ENCODE measurements at regions of chr11 and their contacts with region 1.

Region 1: GRCh38 chr11:3854977-3855807 is at the start of gene STIM1:
- DNase-seq: peak; percentile 88
- ATAC-seq: peak; percentile 76
- H3K4me3 ChIP-seq: peak within 1 kb of the TSS; percentile 94
- H3K27ac ChIP-seq: peak within 1 kb of the TSS; percentile 97
- H3K4me1 ChIP-seq: peaks cover 32% of the 10 kb centered on the region
- H3K27me3 ChIP-seq: no peaks in the 10 kb centered on the region
- CTCF ChIP-seq: peak; percentile 87 to 98 (median 93); a peak in 5 of 6 replicates
- EP300 ChIP-seq: no peak
- POLR2A ChIP-seq: peak; percentile 72
- RAD21 ChIP-seq: peak; percentile 92
- polyA plus RNA-seq, gene STIM1: 8.6 to 9.9 TPM

Region 2: DNA sequence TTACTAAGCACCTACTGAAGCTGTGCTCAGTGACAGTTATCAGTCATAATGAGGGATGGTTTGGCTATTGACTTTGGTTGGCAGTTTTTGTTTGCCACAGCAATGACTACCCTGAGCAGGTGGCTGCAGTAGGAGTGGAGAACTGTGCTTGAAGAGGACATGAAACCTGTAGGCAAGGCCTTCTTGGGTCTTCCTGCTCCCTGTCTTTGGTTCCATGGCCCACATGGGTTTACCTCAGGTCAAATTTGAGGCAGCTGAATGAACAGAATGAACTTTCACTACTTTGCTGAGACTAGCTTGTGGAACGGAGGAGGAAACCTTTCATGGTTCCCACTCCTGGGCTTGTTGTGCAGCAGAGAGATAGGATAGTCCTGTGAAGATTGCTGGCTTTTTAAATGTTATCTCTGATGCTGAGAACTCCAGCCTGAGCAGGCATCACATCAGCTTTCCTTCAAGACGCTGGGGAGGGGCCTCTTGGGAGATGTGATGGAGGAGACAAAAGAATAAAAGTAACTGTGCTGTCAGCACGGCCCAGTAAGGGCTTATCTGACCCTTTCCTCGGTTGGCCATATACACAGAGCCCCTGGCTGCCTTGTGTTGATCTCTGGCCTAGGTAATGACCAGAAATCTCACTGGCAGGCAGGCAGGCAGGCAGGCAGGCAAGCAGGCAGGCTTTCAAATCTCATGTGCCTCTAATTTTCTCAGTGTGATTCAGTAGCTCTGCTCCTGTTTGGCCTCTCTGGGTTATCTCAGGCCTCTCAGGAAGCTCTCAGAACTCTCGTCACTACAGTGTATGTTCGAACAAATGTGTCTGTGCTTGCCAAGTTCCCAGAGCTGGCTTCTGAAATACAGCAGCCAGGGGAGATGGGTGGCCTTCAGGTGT is 12.3 kb after region 1 on chr11:
- CTCF ChIA-PET with region 1: interaction called, 1,047 read pairs
- POLR2A ChIA-PET with region 1: interaction called, 405 read pairs
- RAD21 ChIA-PET with region 1: interaction called, 253 read pairs
- SMC1A ChIA-PET with region 1: interaction called, 633 read pairs
- in situ Hi-C with region 1: no loop called
- intact Hi-C with region 1: no loop called
- DNase-seq: peak; percentile 66
- ATAC-seq: peak; percentile 57
- H3K4me3 ChIP-seq: peak overlapping the region; percentile 28; the same call in 1 of the 2 replicates
- H3K27ac ChIP-seq: peak overlapping the region; percentile 82
- H3K4me1 ChIP-seq: peaks cover 65% of the 10 kb centered on the region
- H3K27me3 ChIP-seq: no peaks in the 10 kb centered on the region
- CTCF ChIP-seq: no peak
- EP300 ChIP-seq: no peak
- POLR2A ChIP-seq: no peak
- RAD21 ChIP-seq: no peak

Region 3: DNA sequence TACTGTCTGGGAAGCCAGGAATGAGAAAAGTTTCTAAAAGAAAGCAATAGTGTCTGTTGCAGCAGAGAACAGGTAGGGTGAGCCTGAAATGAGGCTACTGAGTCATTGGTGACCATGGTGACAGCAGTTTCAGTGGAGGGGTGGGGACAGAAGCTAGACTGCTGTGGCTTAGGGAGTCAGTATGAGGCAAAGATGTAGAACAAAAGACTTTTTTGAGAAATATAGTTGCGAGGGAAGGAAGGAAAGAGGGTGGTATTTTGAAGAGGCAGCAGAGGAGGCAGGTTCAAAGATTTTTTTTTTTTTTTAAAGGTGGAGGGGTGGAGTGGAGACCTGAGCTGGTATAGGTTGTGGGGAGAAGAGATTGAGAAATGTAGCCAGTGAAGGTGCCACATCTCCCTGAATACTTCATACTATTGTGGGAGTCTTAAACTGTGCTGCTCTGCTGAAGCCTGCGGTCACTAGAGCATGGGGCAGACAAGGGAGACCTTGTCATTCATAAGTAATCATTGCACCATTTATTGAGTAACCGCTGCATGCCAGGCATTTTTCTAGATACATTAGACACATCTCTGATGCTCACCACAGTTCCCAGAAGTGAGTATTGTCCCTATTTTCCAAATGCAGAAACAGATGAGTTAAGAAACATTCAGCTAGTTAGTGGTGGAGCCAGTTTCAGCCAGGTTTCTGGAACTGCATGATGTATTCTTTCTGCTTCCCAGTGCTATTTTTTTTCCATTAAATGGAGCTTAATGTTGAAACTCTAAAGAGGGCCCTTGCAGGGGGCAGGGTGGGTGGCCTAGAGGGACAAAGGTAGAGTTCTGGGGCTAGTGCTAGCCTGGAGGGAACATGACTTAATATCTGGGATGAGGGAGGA is 50.1 kb after region 1 on chr11:
- CTCF ChIA-PET with region 1: interaction called, 36 read pairs
- POLR2A ChIA-PET with region 1: interaction called, 10 read pairs
- RAD21 ChIA-PET with region 1: interaction called, 87 read pairs
- SMC1A ChIA-PET with region 1: interaction called, 21 read pairs
- in situ Hi-C with region 1: no loop called
- intact Hi-C with region 1: no loop called
- DNase-seq: no peak
- ATAC-seq: peak; percentile 89
- H3K4me3 ChIP-seq: no peak overlapping the region
- H3K27ac ChIP-seq: no peak overlapping the region
- H3K4me1 ChIP-seq: peaks cover 51% of the 10 kb centered on the region
- H3K27me3 ChIP-seq: no peaks in the 10 kb centered on the region
- CTCF ChIP-seq: no peak
- EP300 ChIP-seq: no peak
- POLR2A ChIP-seq: no peak
- RAD21 ChIP-seq: no peak

Region 4: GRCh38 chr11:3939211-3939610 is 84.0 kb after region 1 on chr11:
- CTCF ChIA-PET with region 1: interaction called, 16 read pairs
- POLR2A ChIA-PET with region 1: no interaction called
- RAD21 ChIA-PET with region 1: interaction called, 5 read pairs
- SMC1A ChIA-PET with region 1: interaction called, 17 read pairs
- in situ Hi-C with region 1: no loop called
- intact Hi-C with region 1: no loop called
- DNase-seq: no peak
- ATAC-seq: peak; percentile 75
- H3K4me3 ChIP-seq: no peak overlapping the region
- H3K27ac ChIP-seq: no peak overlapping the region
- H3K4me1 ChIP-seq: peaks cover 18% of the 10 kb centered on the region
- H3K27me3 ChIP-seq: no peaks in the 10 kb centered on the region
- CTCF ChIP-seq: no peak
- EP300 ChIP-seq: no peak
- POLR2A ChIP-seq: no peak
- RAD21 ChIP-seq: no peak

Region 5: DNA sequence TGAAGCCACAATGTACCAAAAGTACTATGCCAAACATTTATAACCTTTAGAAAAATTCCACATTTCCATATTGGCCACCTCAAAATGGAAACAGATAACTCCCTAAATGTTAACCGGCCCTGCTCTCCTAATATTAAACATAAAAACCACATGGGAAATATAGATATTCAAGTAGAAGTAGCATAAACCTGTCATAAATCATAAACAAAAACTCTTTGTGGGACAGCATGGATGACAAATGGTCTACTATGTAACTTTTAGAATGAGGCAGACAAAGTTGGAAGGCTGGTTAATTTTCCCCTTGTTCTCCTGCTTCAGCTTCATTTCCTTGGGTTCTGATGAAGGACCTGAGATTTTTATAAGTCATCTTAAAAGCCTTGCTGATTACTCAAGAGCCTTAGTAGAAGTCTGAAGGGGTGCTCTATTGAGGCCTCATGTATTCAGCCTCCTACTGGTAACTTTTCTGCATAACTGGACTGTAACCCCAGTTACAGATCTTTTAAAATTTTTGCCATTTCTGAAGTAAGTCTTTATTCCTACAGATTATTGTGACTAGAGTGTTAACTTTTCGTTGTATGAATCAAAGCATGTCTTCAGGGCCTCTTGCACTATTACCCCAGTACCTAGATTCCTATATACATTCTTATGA is 116.7 kb after region 1 on chr11:
- CTCF ChIA-PET with region 1: interaction called, 27 read pairs
- POLR2A ChIA-PET with region 1: interaction called, 4 read pairs
- RAD21 ChIA-PET with region 1: interaction called, 13 read pairs
- SMC1A ChIA-PET with region 1: interaction called, 17 read pairs
- in situ Hi-C with region 1: no loop called
- intact Hi-C with region 1: no loop called
- DNase-seq: no peak
- ATAC-seq: peak; percentile 62
- H3K4me3 ChIP-seq: no peak overlapping the region
- H3K27ac ChIP-seq: no peak overlapping the region
- H3K4me1 ChIP-seq: peaks cover 4% of the 10 kb centered on the region; the same call in 1 of the 2 replicates
- H3K27me3 ChIP-seq: no peaks in the 10 kb centered on the region
- CTCF ChIP-seq: 0 out of 6 replicates have a peak, but pooled peaks of 1 of the 3 experiments have one; percentile 12
- EP300 ChIP-seq: no peak
- POLR2A ChIP-seq: no peak
- RAD21 ChIP-seq: no peak; the same call in 1 of the 2 replicates

Region 6: DNA sequence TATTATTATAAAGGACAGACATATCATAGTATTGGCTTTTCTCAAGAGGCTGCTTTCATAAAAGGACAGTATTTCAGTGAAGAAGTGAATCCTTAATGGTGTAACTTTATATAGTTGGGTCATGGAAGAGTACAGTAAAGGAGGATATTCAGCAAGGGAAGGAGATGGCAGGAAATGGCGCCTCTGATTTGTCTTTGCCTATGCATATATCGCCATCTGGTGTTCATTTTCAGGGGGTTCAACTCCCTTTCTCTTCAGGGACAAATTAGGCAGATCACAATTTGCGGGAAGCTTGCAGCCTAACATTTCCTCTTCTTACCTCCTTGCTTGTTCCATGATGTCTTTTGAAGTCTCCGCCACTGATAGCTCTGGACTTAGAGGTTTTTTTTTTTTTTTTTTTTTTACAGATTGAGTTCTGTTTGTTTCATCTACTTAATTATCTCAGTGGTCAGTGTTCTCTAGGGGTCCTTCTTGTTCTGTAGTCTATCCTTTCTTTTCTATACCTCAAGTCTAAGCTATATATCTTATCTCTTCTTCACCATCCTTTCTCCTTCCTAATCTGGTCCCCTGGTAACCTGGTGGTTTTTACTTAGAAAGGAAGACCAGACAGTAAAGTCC is 217.6 kb after region 1 on chr11:
- CTCF ChIA-PET with region 1: interaction called, 979 read pairs
- POLR2A ChIA-PET with region 1: interaction called, 39 read pairs
- RAD21 ChIA-PET with region 1: interaction called, 605 read pairs
- SMC1A ChIA-PET with region 1: interaction called, 805 read pairs
- in situ Hi-C with region 1: no loop called
- intact Hi-C with region 1: no loop called
- DNase-seq: peak; percentile 51
- ATAC-seq: peak; percentile 95
- H3K4me3 ChIP-seq: no peak overlapping the region
- H3K27ac ChIP-seq: no peak overlapping the region
- H3K4me1 ChIP-seq: no peaks in the 10 kb centered on the region
- H3K27me3 ChIP-seq: no peaks in the 10 kb centered on the region
- CTCF ChIP-seq: peak; percentile 75 to 95 (median 83)
- EP300 ChIP-seq: no peak
- POLR2A ChIP-seq: no peak
- RAD21 ChIP-seq: peak; percentile 98